Activated T-helper 2 cell treated with anti-CD3 and anti-CD28 coated beads, Interferon-gamma antibody, Interleukin-2, Interleukin-4, amounts not matched to agents 10 μg/mL and 5 μg/mL and 100 μg/mL, durations not matched to agents 14 hours and 24 hours and 36 hours (primary cell): ENCODE measurements at regions of chr15 and their contacts with region 1.

Region 1: DNA sequence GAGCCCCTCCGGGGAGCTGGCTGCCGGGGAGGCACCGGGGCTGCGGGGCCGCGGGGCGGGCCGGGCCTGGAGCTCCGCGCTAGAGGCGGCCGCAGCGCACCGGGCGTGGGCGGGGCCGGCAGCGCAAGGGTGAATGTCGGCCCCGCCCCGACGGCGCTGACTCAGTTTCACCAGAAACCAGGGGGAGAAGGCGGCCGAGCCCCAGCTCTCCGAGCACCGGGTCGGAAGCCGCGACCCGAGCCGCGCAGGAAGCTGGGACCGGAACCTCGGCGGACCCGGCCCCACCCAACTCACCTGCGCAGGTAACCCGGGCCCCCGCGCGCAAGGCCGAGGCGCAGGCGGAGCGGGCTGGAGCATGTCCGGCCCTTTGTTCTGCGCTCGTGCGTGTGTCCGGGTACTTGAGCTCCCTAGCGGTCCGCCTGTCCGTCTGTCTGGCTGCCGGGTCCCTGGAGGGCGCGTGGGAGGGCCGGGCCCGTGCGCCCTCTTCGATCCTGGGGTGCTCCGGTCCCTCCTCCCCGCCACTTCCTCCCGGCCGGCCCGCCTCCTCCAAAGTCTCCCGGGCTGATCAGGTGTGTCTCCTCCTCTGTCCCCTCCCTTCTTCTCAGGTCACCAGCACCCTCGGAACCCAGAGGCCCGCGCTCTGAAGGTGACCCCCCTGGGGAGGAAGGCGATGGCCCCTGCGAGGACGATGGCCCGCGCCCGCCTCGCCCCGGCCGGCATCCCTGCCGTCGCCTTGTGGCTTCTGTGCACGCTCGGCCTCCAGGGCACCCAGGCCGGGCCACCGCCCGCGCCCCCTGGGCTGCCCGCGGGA is at the start of gene SPINT1:
- DNase-seq: peak; percentile 26
- H3K4me3 Mint-ChIP-seq: peak within 1 kb of the TSS; percentile 87
- H3K27ac Mint-ChIP-seq: peak within 1 kb of the TSS; percentile 24
- H3K4me1 Mint-ChIP-seq: peaks cover 21% of the 10 kb centered on the region
- H3K27me3 Mint-ChIP-seq: peaks cover 24% of the 10 kb centered on the region
- total RNA-seq, gene SPINT1: 22.5 and 24.5 TPM in 2 replicates

Region 2: DNA sequence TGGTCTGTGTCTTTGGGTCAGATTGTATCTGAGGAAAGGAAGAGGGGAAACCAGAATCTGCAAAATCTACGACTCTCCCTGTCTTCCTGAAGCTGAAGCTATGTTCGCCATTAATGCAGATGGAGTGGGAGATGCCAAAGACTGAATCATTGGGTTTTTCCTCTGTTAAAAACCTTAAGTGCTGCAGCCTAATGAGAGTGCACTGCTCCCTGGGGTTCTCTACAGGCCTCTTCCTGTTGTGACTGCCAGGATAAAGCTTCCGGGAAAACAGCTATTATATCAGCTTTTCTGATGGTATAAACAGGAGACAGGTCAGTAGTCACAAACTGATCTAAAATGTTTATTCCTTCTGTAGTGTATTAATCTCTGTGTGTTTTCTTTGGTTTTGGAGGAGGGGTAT is 113.1 kb before region 1 on chr15:
- intact Hi-C with region 1: no loop called
- DNase-seq: no peak
- H3K4me3 Mint-ChIP-seq: no peak overlapping the region
- H3K27ac Mint-ChIP-seq: no peak overlapping the region
- H3K4me1 Mint-ChIP-seq: no peaks in the 10 kb centered on the region
- H3K27me3 Mint-ChIP-seq: no peaks in the 10 kb centered on the region

Region 3: GRCh38 chr15:40807028-40807887 is 36.8 kb before region 1 on chr15 and contains the starts of genes DNAJC17 and ZFYVE19:
- intact Hi-C with region 1: loop called (anchors 1 kb)
- DNase-seq: peak; percentile 93
- H3K4me3 Mint-ChIP-seq: peak within 1 kb of the TSS; percentile 96
- H3K27ac Mint-ChIP-seq: peak within 1 kb of the TSS; percentile 98
- H3K4me1 Mint-ChIP-seq: peaks cover 18% of the 10 kb centered on the region
- H3K27me3 Mint-ChIP-seq: no peaks in the 10 kb centered on the region
- total RNA-seq, gene DNAJC17: 44.4 and 48.0 TPM in 2 replicates
- total RNA-seq, gene ZFYVE19: 37.6 and 39.3 TPM in 2 replicates

Region 4: GRCh38 chr15:40928821-40929659 is 85.0 kb after region 1 on chr15 and contains the start of gene DLL4:
- intact Hi-C with region 1: no loop called
- DNase-seq: no peak
- H3K4me3 Mint-ChIP-seq: peak within 1 kb of the TSS; percentile 73
- H3K27ac Mint-ChIP-seq: no peak within 1 kb of the TSS
- H3K4me1 Mint-ChIP-seq: peaks cover 36% of the 10 kb centered on the region
- H3K27me3 Mint-ChIP-seq: peaks cover 70% of the 10 kb centered on the region
- total RNA-seq, gene DLL4: 0.14 and 0.37 TPM in 2 replicates